SK-N-SH (cell line): ENCODE measurements at regions of chr20 and their contacts with region 1.

Region 1: DNA sequence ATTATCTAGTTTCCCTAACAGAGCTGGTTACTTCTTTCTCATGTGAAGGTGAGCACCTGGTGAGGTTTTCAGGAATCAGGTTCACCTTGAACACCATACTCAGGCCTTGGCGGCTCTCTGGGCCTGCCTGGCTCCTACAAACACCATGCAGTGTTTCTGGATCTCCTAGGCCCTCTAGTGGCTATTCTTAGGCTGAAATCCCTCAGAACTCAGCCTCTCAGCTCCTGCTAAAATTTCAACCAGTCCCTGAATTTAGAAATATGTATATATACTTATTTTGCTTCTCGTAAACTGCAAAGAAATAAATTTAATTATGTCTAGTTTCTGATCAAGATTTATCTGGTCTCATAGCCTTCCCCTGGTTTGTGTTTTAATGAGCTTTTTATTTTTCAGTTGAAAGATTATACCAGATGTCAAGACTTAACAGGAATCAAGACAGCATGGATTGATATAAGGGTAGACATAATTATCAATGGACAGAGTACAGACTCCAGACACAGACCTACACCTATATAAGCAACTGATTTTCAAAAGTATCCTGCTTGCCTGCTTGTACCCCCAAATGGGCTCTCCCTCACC is 55.9 kb downstream of the ANKEF1 start:
- DNase-seq: peak; percentile 50
- H3K4me3 ChIP-seq: no peak overlapping the region; a peak in 1 of 4 replicates
- H3K27ac ChIP-seq: no peak overlapping the region
- H3K4me1 ChIP-seq: peaks cover 4 to 11% of the 10 kb centered on the region in 2 experiments; a peak in 1 of 4 replicates
- H3K27me3 ChIP-seq: no peaks in the 10 kb centered on the region
- CTCF ChIP-seq: peak; percentile 90
- EP300 ChIP-seq: no peak
- RAD21 ChIP-seq: peak; percentile 88

Region 2: DNA sequence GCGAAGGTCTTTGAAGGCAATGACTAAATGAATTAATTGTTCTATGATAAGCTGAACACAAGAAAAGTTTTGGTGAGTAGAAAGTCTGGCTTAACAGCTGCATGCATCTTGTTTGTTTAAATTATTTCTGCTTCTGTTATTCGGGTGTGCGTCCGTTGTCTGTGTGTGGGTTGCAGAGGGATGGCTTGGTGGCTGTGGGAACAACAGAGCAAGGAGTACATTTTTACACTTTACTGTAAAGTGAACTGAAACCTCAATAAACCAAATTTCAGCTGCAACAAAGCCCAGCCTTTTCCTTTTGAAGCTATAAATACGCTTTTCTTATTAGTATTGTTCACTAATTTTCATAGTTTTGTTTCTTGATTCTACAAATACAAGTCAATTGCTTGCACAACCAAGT is 579.8 kb before region 1 on chr20:
- CTCF ChIA-PET with region 1: no interaction called
- POLR2A ChIA-PET with region 1: no interaction called
- DNase-seq: no peak
- H3K4me3 ChIP-seq: no peak overlapping the region
- H3K27ac ChIP-seq: no peak overlapping the region
- H3K4me1 ChIP-seq: peaks cover 0 to 16% of the 10 kb centered on the region in 2 experiments; a peak in 3 of 4 replicates
- H3K27me3 ChIP-seq: peaks cover 4% of the 10 kb centered on the region; the same call in 1 of the 2 replicates
- CTCF ChIP-seq: no peak
- EP300 ChIP-seq: no peak
- RAD21 ChIP-seq: no peak

Region 3: GRCh38 chr20:9616833-9617489 is 473.7 kb before region 1 on chr20:
- CTCF ChIA-PET with region 1: interaction called, 21 read pairs
- POLR2A ChIA-PET with region 1: no interaction called
- DNase-seq: peak; percentile 52
- H3K4me3 ChIP-seq: peak overlapping the region in 1 of 2 experiments; percentile 13; a peak in 1 of 4 replicates
- H3K27ac ChIP-seq: no peak overlapping the region
- H3K4me1 ChIP-seq: peaks cover 0 to 8% of the 10 kb centered on the region in 2 experiments; a peak in 2 of 4 replicates
- H3K27me3 ChIP-seq: no peaks in the 10 kb centered on the region
- CTCF ChIP-seq: peak; percentile 93
- EP300 ChIP-seq: no peak
- RAD21 ChIP-seq: peak; percentile 94

Region 4: DNA sequence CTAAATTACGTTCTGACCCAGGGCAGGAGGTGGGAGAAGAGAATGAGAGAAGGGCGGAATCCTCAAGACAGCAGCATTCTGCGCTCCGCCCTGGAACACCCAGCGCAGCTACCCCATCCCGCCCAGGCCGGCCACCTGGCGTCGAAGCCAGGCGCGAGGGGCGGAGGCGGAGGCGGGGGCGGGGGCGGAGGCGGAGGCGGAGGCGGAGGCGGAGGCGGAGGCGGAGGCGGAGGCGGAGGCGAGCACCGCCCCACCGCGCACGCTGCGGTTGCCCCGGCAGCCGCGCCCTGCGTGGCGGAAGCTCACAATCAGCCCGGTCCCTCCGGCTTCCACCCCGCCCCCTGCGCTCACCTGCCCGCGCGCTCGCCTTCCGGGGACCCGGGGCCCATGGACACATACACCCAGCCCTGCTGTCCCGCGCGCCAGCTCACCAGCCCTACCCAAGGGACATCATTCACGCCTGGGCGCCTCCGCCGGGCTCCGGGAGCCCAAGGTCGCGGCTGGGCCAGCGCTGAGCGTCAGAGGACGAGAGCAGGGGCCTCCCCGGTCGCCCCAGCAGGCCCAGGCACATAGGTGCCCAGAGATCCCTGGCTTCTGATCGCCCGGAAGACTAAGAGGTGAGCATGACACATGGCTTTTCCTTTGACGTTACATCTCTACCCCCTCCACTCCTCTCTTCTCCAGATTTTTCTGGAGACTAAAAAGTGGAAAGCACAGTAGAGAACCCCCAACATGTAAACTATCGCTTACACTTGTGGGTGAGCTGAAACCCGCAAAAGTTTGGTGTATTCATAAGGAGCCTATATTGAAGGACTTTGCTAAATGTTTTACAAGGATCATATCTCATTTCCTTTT is 55.7 kb before region 1 on chr20 and contains the start of gene ANKEF1:
- CTCF ChIA-PET with region 1: interaction called, 23 read pairs
- POLR2A ChIA-PET with region 1: no interaction called
- DNase-seq: peak; percentile 94
- H3K4me3 ChIP-seq: peak within 1 kb of the TSS; percentile 72 to 88
- H3K27ac ChIP-seq: peak within 1 kb of the TSS; percentile 3 to 69; a peak in 2 of 4 replicates
- H3K4me1 ChIP-seq: peaks cover 4 to 8% of the 10 kb centered on the region in 2 experiments; a peak in 2 of 4 replicates
- H3K27me3 ChIP-seq: no peaks in the 10 kb centered on the region
- CTCF ChIP-seq: no peak
- EP300 ChIP-seq: no peak
- RAD21 ChIP-seq: no peak
- polyA plus RNA-seq, gene ANKEF1: 2.3 and 2.9 TPM in 2 replicates

Region 5: GRCh38 chr20:10105046-10105445 is 14.4 kb after region 1 on chr20:
- CTCF ChIA-PET with region 1: interaction called, 24 read pairs
- POLR2A ChIA-PET with region 1: no interaction called
- DNase-seq: no peak
- H3K4me3 ChIP-seq: no peak overlapping the region
- H3K27ac ChIP-seq: peak overlapping the region in 1 of 2 experiments; percentile 34; a peak in 1 of 4 replicates
- H3K4me1 ChIP-seq: no peaks in the 10 kb centered on the region; a peak in 1 of 4 replicates
- H3K27me3 ChIP-seq: no peaks in the 10 kb centered on the region
- CTCF ChIP-seq: no peak
- EP300 ChIP-seq: no peak
- RAD21 ChIP-seq: no peak

Region 6: GRCh38 chr20:10171864-10172751 is 81.4 kb after region 1 on chr20:
- CTCF ChIA-PET with region 1: interaction called, 18 read pairs
- POLR2A ChIA-PET with region 1: no interaction called
- DNase-seq: peak; percentile 89
- H3K4me3 ChIP-seq: peak overlapping the region; percentile 54 to 58
- H3K27ac ChIP-seq: peak overlapping the region in 1 of 2 experiments; percentile 58; a peak in 2 of 4 replicates
- H3K4me1 ChIP-seq: peaks cover 0 to 8% of the 10 kb centered on the region in 2 experiments; a peak in 1 of 4 replicates
- H3K27me3 ChIP-seq: no peaks in the 10 kb centered on the region
- CTCF ChIP-seq: no peak
- EP300 ChIP-seq: no peak
- RAD21 ChIP-seq: peak; percentile 15; the same call in 1 of the 2 replicates

Region 7: DNA sequence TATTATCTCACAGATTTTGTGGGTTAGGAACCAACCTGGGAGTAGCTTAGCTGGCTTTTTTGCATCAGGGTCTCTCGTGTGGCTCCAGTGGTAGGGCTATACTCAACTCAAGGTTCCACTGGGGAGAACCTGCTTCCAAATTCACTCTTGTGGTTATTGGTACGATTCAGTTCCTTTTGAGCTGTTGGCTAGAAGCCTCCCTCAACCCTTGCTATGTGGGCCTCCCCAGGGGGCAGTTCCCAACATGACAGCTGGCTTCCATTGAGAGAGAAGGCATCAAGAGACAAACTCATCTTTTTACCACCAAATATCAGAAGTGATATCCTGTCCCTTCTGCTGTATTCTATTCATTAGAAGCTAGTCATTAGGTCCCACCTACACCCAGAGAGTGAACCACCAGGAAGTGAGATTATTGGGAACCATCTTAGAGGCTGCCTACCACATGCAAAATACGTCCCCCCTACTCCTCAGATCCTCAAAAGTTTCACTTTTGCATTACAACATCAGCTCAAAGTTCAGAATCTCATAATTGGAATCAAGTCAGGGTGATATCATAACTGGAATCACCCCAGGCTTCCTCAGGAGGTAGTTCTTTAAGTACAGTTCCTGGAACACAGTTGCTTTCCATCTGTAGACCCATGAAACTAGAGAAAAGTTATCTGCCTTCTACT is 312.4 kb after region 1 on chr20:
- CTCF ChIA-PET with region 1: interaction called, 15 read pairs
- POLR2A ChIA-PET with region 1: no interaction called
- DNase-seq: no peak
- H3K4me3 ChIP-seq: no peak overlapping the region
- H3K27ac ChIP-seq: no peak overlapping the region
- H3K4me1 ChIP-seq: no peaks in the 10 kb centered on the region
- H3K27me3 ChIP-seq: no peaks in the 10 kb centered on the region
- CTCF ChIP-seq: no peak
- EP300 ChIP-seq: no peak
- RAD21 ChIP-seq: no peak

Region 8: DNA sequence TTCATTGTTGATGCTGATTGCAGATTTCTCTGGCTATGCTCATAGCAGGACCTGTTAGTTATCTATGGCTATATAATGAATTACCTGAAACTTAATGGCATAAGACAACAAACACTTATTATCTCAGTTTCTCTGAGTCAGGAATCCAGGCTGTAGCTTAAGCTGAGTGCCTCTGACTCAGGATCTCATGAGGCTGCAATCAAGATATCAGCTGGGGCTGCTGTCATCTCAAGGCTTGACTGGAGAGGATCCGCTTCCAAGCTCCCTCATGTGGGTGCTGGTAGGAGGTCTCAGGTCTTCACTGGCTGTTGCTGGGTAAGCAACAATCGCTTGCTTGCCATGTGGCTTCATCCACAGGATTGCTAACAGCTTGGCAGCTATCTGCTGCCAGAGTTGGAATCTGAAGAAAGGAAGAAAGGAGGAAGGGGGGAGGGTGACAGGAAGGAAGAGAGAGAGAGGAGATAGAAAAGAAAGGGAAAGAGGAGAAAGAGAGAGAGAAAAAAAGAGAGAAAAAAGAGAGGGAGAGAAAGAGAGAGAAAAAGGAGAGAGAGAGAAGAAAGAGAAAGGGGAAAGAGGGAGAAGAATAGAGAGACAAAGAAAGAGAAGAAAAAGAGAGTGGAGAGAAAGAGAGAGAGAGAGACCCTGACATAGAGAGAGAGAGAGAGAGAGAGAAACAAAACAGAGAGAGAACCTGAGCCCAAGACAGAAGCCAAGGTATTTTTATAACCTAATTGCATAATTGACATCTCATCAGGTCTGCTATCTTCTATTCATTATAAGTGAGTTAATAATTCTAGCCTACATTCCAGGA is 1248.0 kb after region 1 on chr20:
- CTCF ChIA-PET with region 1: no interaction called
- POLR2A ChIA-PET with region 1: no interaction called
- DNase-seq: no peak
- H3K4me3 ChIP-seq: no peak overlapping the region
- H3K27ac ChIP-seq: no peak overlapping the region
- H3K4me1 ChIP-seq: no peaks in the 10 kb centered on the region
- H3K27me3 ChIP-seq: no peaks in the 10 kb centered on the region; the same call in 1 of the 2 replicates
- CTCF ChIP-seq: no peak
- EP300 ChIP-seq: no peak
- RAD21 ChIP-seq: no peak